Dorsolateral prefrontal cortex (tissue), 120 donors: ENCODE measurements at regions of chr22 and their contacts with region 1.

Region 1: DNA sequence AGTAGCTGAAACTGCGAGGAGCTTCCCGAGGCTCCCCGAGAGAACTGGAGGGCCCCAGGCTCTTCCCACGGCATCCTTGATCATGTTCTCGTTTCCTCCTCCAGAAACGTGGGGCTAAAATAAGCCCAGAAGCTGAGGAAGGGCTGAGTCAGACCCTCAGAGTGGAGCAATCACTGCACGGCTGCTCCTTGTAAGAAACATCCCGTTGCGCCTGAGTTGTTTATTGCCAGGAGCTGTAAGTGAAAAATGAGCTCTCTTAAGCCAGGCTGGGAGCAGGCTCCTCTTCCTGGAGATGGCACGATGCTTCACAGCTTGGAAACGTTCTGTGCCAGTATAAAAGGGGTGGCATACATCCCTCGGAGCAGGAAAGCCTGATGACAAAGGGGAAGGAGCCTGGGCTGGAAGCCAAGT is 47.3 kb upstream of the SYN3 start:
- DNase-seq: peak in 9 of 10 donors; percentile 32 to 84 (median 66)
- H3K4me3 ChIP-seq: no peak overlapping the region
- H3K27ac ChIP-seq: peak overlapping the region in 45 of 59 donors; percentile 0 to 80 (median 49)
- H3K27me3 ChIP-seq: no peaks in the 10 kb centered on the region
- CTCF ChIP-seq: no peak

Region 2: DNA sequence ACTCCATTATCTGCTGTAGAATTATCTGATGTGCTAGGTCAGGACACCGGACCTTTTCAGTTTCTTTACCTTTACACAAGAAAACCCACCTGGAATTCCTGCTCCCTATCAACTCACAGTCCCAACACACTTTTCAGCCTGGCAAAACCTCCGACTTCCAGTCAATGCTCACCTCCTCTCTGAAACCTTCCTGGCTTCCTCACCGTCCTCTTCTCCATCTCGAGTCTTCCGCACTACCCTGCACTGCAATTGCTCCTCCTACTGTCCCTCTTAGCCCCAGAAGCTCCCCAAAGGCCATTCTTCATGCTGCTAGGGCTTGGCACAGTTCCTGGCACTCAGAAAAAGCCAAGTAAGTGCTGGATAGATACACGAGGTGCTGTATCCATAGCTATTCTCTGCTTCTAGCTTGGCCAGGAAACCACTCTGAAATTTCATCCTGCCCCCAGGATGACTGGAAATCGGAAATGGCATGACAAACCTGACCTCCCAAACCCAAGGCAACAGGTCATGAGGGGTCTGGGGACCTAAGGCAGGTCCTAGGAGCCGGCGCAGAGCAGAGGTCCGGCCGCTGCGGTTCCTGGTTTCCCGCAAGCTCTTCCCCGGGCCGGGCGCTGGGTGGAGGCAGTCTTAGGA is 48.0 kb before region 1 on chr22:
- intact Hi-C with region 1: loop called in 1 of 2 experiments (anchors 5 kb)
- DNase-seq: peak in 1 of 10 donors; percentile 18
- H3K4me3 ChIP-seq: peak overlapping the region in 58 of 59 donors; percentile 21 to 74 (median 59)
- H3K27ac ChIP-seq: peak overlapping the region in 46 of 59 donors; percentile 0 to 83 (median 62)
- H3K27me3 ChIP-seq: peaks cover 0 to 68% (median 36%) of the 10 kb centered on the region in 45 donors
- CTCF ChIP-seq: no peak

Region 3: GRCh38 chr22:33070600-33070999 is 34.9 kb before region 1 on chr22:
- intact Hi-C with region 1: loop called in 1 of 2 experiments (anchors 1 kb)
- DNase-seq: peak in 4 of 10 donors; percentile 41 to 72 (median 68)
- H3K4me3 ChIP-seq: no peak overlapping the region
- H3K27ac ChIP-seq: peak overlapping the region in 5 of 59 donors; percentile 13 to 60 (median 44)
- H3K27me3 ChIP-seq: peaks cover 0 to 10% (median 0%) of the 10 kb centered on the region in 45 donors
- CTCF ChIP-seq: no peak

Region 4: DNA sequence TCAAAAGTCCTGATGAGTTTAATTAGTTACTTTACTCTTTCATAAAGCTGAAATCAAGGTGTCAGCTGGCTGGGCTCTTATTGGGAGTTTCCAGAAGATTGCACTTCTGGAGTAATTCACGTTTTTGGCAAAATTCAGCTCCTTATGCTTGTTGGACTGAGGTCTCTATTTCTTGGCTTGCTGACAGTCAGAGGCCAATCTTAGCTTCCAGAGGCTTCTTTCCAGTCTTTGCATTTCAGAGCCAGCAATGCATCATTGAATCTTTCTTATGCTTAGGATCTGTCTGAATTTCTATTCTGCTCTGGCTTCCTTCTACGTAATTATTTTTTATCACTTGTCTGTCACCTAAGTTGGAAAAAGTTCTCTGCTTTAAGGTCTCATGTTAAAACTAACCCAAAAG is 44.1 kb after region 1 on chr22:
- intact Hi-C with region 1: no loop called
- DNase-seq: no peak
- H3K4me3 ChIP-seq: no peak overlapping the region
- H3K27ac ChIP-seq: no peak overlapping the region
- H3K27me3 ChIP-seq: no peaks in the 10 kb centered on the region
- CTCF ChIP-seq: no peak